ENCODE measurements at regions of chr5 and their contacts with region 1.

Region 1: GRCh38 chr5:68962757-68963484 is 130.9 kb upstream of the SLC30A5 start:
- DNase-seq: peak; percentile 77
- H3K4me3 Mint-ChIP-seq: no peak overlapping the region
- H3K27ac Mint-ChIP-seq: no peak overlapping the region
- H3K4me1 Mint-ChIP-seq: peaks cover 8% of the 10 kb centered on the region
- H3K27me3 Mint-ChIP-seq: no peaks in the 10 kb centered on the region
- CTCF ChIP-seq: peak; percentile 71

Region 2: GRCh38 chr5:68884883-68885282 is 78.0 kb before region 1 on chr5:
- CTCF ChIA-PET with region 1: no interaction called
- intact Hi-C with region 1: loop called (anchors 1 kb)
- DNase-seq: no peak
- H3K4me3 Mint-ChIP-seq: no peak overlapping the region
- H3K27ac Mint-ChIP-seq: no peak overlapping the region
- H3K4me1 Mint-ChIP-seq: no peaks in the 10 kb centered on the region
- H3K27me3 Mint-ChIP-seq: no peaks in the 10 kb centered on the region
- CTCF ChIP-seq: no peak

Region 3: DNA sequence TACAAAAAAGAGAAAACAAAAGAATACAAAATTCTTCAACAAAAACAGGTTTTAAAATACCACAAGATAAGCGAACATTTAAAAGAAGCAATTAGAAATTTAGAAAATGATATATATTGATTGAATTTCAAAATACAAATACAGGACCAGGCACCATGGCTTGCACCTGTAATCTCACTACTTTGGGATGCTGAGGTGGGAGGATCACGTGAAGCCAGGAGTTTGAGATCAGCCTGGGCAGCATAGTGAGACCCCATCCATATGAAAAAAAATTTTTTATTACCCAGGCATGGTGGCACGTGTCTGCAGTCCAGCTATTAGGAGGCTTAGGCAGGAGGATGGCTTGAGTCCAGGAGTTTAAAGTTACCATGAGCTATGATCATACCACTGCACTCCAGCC is 21.0 kb after region 1 on chr5:
- CTCF ChIA-PET with region 1: no interaction called
- intact Hi-C with region 1: no loop called
- DNase-seq: no peak
- H3K4me3 Mint-ChIP-seq: no peak overlapping the region
- H3K27ac Mint-ChIP-seq: no peak overlapping the region
- H3K4me1 Mint-ChIP-seq: no peaks in the 10 kb centered on the region
- H3K27me3 Mint-ChIP-seq: no peaks in the 10 kb centered on the region
- CTCF ChIP-seq: no peak

Measured in Calu3 (cell line).